ENCODE measurements at regions of chr1 and their contacts with region 1.

Region 1: GRCh38 chr1:76154206-76154956 is 79.8 kb downstream of the ST6GALNAC3 start:
- DNase-seq: peak; percentile 62 to 86 (median 84)
- ATAC-seq: peak; percentile 90
- H3K4me3 ChIP-seq: peak overlapping the region; percentile 21
- H3K27ac ChIP-seq: peak overlapping the region; percentile 18
- H3K4me1 ChIP-seq: peaks cover 2% of the 10 kb centered on the region
- H3K27me3 ChIP-seq: no peaks in the 10 kb centered on the region

Region 2: DNA sequence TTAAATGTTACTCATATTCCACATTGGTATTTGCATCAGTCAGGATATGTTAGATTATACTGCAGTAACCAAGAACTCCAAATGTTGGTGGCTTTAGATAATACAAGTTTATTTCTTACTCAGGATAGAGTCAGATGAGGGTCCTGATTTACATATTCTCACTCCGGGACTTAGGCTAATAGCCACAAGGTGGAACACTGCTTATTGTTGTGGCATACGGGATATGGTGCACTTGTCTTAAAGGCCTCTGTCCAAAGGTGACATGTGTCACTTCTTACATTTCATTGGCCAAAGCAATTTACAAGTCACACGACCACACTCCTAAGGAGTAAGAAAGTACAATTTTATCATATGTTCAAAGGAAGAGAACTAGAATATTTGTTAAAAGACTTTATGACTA is 458.4 kb before region 1 on chr1:
- intact Hi-C with region 1: no loop called
- DNase-seq: no peak
- ATAC-seq: no peak
- H3K4me3 ChIP-seq: no peak overlapping the region
- H3K27ac ChIP-seq: no peak overlapping the region
- H3K4me1 ChIP-seq: no peaks in the 10 kb centered on the region
- H3K27me3 ChIP-seq: no peaks in the 10 kb centered on the region

Region 3: GRCh38 chr1:75991497-75992114 is 162.8 kb before region 1 on chr1:
- intact Hi-C with region 1: loop called in 1 of 4 experiments (anchors 10 kb)
- DNase-seq: peak; percentile 90 to 95 (median 93)
- ATAC-seq: peak; percentile 77 to 82
- H3K4me3 ChIP-seq: no peak overlapping the region
- H3K27ac ChIP-seq: no peak overlapping the region
- H3K4me1 ChIP-seq: no peaks in the 10 kb centered on the region
- H3K27me3 ChIP-seq: no peaks in the 10 kb centered on the region

Region 4: DNA sequence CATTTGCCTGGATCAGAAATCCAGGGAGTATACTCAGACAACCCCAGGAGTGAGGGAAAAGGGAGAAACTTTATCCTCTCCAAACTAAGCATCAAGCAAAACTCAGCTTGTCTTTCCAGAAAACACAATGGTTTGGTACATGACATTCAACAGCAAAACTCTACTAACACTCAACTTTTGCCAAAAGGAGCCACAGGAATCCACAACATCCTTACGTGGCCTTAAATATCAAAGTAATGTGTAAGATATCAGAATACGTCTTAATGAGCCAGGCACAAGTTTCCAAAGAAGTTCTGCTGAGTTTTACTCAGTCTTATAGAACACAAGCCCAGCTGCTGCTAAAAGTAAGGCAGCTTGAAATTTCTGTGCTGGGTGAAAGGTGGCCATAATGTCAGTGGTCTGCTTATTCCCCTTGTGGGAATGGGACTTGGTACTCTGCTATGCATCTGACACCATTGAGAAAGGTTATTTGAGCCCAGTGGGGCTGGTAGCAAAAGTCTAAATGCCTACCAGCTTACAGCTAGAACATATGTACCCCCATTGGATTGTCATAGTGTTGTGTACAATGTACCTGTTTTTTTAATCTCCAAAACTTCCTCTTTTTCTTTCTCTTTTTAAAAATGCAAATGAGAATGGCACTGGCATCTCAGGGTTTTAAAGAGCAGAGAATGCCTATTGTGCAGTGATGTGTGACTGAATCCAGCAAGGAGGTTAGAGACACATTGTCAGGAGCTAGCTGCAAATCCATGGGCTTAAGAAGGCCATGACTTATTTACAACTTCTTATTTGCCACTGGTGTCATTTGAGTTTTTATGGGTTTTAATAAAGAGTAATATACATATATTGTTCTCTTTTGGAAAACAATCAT is 141.8 kb before region 1 on chr1:
- intact Hi-C with region 1: no loop called
- DNase-seq: no peak
- ATAC-seq: no peak
- H3K4me3 ChIP-seq: no peak overlapping the region
- H3K27ac ChIP-seq: no peak overlapping the region
- H3K4me1 ChIP-seq: no peaks in the 10 kb centered on the region
- H3K27me3 ChIP-seq: no peaks in the 10 kb centered on the region

Region 5: DNA sequence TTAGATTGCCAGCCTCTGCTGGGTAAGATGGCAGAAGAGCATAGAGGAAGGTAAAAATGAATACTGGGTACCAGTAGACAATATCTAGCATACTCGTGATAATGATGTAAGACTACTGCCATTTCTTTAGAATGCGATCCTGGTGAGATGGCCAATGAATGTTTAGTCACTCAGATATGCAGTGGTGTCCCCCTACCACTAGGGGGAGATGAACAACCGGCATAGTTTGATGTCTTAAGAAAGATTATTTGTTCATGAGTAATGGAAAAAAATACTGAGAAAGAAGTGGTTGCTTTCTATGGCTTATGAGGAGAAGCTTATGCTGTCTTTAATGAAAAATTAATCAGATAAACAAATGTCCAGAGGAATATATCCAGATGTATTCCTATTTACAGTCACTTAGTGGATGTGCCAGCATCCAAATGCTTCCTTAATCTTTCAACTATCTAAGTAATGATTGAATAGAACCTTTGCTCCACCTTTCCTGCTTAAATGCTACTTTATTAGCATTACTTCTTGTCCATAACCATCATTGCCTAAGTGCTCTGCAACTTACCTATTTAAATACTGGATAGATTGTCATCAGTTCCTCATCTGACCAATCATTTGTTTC is 176.7 kb after region 1 on chr1:
- intact Hi-C with region 1: no loop called
- DNase-seq: peak in 1 of 3 donors; percentile 14
- ATAC-seq: peak; percentile 29 to 69
- H3K4me3 ChIP-seq: no peak overlapping the region
- H3K27ac ChIP-seq: no peak overlapping the region
- H3K4me1 ChIP-seq: no peaks in the 10 kb centered on the region
- H3K27me3 ChIP-seq: no peaks in the 10 kb centered on the region

Region 6: GRCh38 chr1:76450229-76450628 is 295.8 kb after region 1 on chr1:
- intact Hi-C with region 1: no loop called
- DNase-seq: no peak
- ATAC-seq: no peak
- H3K4me3 ChIP-seq: no peak overlapping the region
- H3K27ac ChIP-seq: no peak overlapping the region
- H3K4me1 ChIP-seq: no peaks in the 10 kb centered on the region
- H3K27me3 ChIP-seq: no peaks in the 10 kb centered on the region

Region 7: GRCh38 chr1:77126307-77126706 is 971.9 kb after region 1 on chr1:
- intact Hi-C with region 1: loop called in 3 of 4 experiments (anchors 5 to 10 kb)
- DNase-seq: no peak
- ATAC-seq: peak; percentile 62 to 67
- H3K4me3 ChIP-seq: no peak overlapping the region
- H3K27ac ChIP-seq: no peak overlapping the region
- H3K4me1 ChIP-seq: no peaks in the 10 kb centered on the region
- H3K27me3 ChIP-seq: no peaks in the 10 kb centered on the region

Region 8: DNA sequence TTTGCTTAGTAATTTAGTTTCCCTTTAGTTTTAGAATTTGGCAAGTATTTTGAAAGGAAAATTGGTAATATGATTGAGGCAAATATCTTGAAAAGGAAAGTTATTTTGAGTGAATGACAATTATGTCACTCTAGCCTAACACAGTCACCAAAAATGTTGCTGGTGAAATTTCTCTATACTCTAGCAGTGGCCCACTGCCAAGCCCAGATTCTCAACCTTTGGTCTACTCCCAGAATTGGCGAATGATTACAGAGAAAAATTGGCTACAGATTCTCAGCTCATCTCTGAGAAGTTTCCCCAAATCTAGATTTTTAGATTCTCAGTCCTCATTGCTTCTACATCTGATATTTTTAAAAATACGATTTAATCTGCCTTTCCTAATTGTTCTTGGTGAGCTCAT is 980.0 kb after region 1 on chr1:
- intact Hi-C with region 1: loop called in 3 of 4 experiments (anchors 5 to 10 kb)
- DNase-seq: peak in 1 of 3 donors; percentile 22
- ATAC-seq: no peak
- H3K4me3 ChIP-seq: no peak overlapping the region
- H3K27ac ChIP-seq: no peak overlapping the region
- H3K4me1 ChIP-seq: peaks cover 2% of the 10 kb centered on the region
- H3K27me3 ChIP-seq: no peaks in the 10 kb centered on the region